ENCODE measurements at regions of chr7 and their contacts with region 1.

Region 1: DNA sequence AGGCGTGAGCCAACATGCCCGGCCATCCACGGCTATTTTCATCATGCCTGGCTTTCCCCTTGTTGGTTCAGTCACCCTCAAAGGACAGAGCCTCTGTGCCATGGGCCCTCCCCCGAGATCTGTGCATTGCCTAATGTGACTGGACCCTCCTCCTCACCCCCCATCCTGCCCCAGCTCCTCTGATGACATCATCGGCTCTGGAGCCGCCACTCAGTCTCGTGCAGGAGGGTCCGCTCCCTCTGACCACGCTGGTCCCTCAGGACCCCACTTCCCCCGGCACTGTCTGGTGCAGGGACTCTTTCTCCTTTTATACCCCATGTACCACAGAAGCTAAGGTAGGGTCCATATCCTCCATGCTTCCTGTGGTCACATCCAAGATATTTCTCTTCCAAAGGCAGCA is 33.2 kb upstream of the BAIAP2L1 start:
- DNase-seq: no peak
- H3K4me3 ChIP-seq: no peak overlapping the region
- H3K27ac ChIP-seq: no peak overlapping the region
- H3K4me1 ChIP-seq: no peaks in the 10 kb centered on the region
- H3K27me3 ChIP-seq: no peaks in the 10 kb centered on the region
- CTCF ChIP-seq: no peak
- POLR2A ChIP-seq: no peak

Region 2: GRCh38 chr7:98617051-98617959 is 183.2 kb after region 1 on chr7 and contains the start of gene NPTX2:
- intact Hi-C with region 1: loop called in 1 of 2 experiments (anchors 10 kb)
- DNase-seq: peak; percentile 77 to 86 (median 83)
- H3K4me3 ChIP-seq: peak within 1 kb of the TSS in 1 of 4 donors; percentile 61
- H3K27ac ChIP-seq: peak within 1 kb of the TSS in 3 of 5 donors; percentile 2 to 76 (median 42)
- H3K4me1 ChIP-seq: peaks cover 0 to 15% of the 10 kb centered on the region in 2 donors
- H3K27me3 ChIP-seq: peaks cover 12% of the 10 kb centered on the region
- CTCF ChIP-seq: peak in 3 of 6 experiments; percentile 36 to 68 (median 54)
- POLR2A ChIP-seq: peak; percentile 79 to 94
- total RNA-seq, gene NPTX2: 24.7 to 81.1 (median 57.4) TPM

Region 3: DNA sequence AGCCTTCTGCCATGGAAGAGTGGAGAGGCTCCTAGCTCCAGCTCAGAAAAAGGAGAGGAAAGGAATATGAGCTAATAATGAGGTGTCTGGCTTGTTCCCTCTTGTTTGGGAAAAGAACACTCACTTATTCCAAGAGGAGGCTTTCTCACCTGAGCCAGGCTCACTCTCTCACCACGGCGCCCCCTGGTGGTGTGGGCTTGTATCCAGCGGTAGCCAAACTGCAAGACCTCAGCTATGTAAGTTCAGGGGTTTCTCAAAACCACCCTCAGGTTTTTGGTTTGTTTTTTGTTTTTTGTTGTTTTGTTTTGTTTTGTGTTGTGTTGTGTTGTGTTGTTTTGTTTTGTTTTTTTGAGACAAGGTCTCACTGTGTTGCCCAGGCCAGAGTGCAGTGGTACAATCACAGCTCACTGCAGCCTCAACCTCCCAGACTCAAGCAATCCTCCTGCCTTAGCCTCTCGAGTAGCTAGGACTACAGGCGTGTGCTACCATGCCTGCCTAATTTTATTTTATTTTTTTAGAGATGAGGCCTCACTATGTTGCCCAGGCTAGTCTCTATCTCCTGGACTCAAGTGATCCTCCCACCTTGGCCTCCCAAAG is 311.7 kb after region 1 on chr7:
- intact Hi-C with region 1: loop called (anchors 2 to 5 kb)
- DNase-seq: peak; percentile 70 to 89 (median 83)
- H3K4me3 ChIP-seq: no peak overlapping the region
- H3K27ac ChIP-seq: no peak overlapping the region
- H3K4me1 ChIP-seq: no peaks in the 10 kb centered on the region
- H3K27me3 ChIP-seq: no peaks in the 10 kb centered on the region
- CTCF ChIP-seq: peak; percentile 75 to 84 (median 78)
- POLR2A ChIP-seq: no peak

Measured in adrenal gland (tissue), 19 donors.